Esophagus muscularis mucosa (tissue), 4 donors: ENCODE measurements at regions of chr4 and their contacts with region 1.

Region 1: GRCh38 chr4:73086095-73086868 is 16.8 kb upstream of the COX18 start:
- DNase-seq: no peak
- H3K4me3 ChIP-seq: peak overlapping the region in 1 of 4 donors; percentile 10
- H3K27ac ChIP-seq: no peak overlapping the region
- H3K4me1 ChIP-seq: peaks cover 0 to 28% (median 5%) of the 10 kb centered on the region in 4 donors
- H3K27me3 ChIP-seq: no peaks in the 10 kb centered on the region
- CTCF ChIP-seq: no peak
- EP300 ChIP-seq: no peak
- POLR2A ChIP-seq: no peak

Region 2: GRCh38 chr4:73127839-73128453 is 41.7 kb after region 1 on chr4:
- intact Hi-C with region 1: loop called (anchors 5 kb)
- DNase-seq: no peak
- H3K4me3 ChIP-seq: no peak overlapping the region
- H3K27ac ChIP-seq: no peak overlapping the region
- H3K4me1 ChIP-seq: no peaks in the 10 kb centered on the region
- H3K27me3 ChIP-seq: no peaks in the 10 kb centered on the region
- CTCF ChIP-seq: peak in 2 of 3 experiments; percentile 19 to 44
- EP300 ChIP-seq: no peak
- POLR2A ChIP-seq: no peak